Common myeloid progenitor, CD34-positive (primary cell): ENCODE measurements at regions of chr1 and their contacts with region 1.

Region 1: DNA sequence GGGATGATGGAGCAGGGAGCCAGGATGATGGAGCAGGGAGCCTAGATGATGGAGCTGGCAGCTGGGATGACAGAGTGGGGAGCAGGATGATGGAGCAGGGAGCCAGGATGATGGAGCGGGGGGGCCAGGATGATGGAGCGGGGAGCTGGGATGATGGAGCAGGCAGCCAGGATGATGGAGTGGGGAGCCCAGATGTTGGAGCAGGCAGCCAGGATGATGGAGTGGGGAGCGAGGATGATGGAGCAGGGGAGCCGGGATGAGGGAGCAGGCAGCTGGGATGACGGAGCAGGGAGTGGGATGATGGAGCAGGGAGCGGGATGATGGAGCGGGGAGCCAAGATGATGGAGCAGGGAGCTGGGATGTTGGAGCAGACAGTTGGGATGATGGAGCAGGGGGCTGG is 16.1 kb downstream of the GALNT2 start:
- DNase-seq: no peak
- H3K4me3 ChIP-seq: no peak overlapping the region
- H3K27ac ChIP-seq: no peak overlapping the region
- H3K4me1 ChIP-seq: peaks cover 0 to 30% (median 15%) of the 10 kb centered on the region in 4 experiments
- H3K27me3 ChIP-seq: no peaks in the 10 kb centered on the region

Region 2: DNA sequence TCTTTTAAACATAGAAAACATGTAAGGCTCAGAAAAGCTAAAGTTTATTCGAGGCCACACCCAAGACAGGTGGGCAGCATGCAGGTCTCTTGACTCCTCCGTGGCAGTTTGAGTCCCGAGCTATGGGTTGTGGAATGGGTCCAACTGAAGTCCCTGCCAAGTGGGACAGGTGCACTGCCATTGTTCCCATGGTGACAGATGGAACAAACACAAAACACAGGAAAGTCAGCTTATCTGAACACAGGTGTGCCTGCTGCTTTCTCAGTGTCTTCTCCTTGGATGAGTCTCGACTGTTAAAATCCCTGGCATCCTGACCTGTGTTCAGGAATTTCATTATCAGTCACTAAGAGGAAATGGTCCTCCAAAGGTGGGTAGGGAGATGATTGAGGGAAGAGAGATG is 911.2 kb before region 1 on chr1:
- CTCF ChIA-PET with region 1: no interaction called
- POLR2A ChIA-PET with region 1: interaction called, 11 read pairs
- DNase-seq: no peak
- H3K4me3 ChIP-seq: no peak overlapping the region
- H3K27ac ChIP-seq: no peak overlapping the region
- H3K4me1 ChIP-seq: no peaks in the 10 kb centered on the region
- H3K27me3 ChIP-seq: no peaks in the 10 kb centered on the region

Region 3: DNA sequence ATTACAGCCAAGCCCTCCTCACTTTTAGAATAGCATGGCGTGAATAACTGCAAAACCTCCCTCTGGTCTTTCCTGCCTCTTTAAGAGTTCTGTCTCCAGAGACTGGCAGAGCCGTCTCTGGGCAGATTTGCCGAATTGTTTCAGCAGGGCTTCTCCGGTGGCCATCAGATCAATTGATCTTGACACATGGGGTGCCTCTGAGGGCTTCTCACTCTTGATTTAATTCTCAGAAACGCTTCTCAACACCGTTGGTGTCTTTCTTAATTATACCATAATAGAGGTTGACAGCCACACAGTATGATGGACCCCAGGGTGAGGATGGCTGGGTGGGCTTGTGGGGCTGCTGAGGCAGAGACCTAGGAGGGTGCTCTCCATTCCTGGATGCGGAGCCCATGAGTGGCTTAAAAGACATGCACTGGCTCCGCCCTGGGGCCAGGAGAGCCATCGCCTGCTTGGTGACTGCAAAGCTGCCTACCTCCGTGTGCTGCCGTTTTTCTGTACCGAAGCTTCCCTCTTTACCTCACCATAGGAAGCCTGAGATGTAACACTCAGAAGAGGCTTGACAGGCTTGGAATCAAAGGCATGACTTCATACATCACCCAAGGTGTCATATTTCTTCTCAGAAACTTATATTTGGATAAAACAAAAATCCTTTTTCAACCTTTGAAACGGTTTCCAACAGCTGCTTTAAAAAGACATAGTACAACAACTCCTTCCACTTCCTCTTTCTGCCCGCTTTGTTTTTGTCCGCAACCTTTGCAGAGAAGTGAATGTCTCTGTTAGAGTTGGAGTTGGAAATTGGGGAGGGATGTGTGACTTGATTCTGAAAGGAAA is 66.9 kb after region 1 on chr1:
- CTCF ChIA-PET with region 1: no interaction called
- POLR2A ChIA-PET with region 1: no interaction called
- DNase-seq: peak; percentile 66 to 85 (median 78)
- H3K4me3 ChIP-seq: peak overlapping the region in 6 of 7 experiments; percentile 52 to 76 (median 59)
- H3K27ac ChIP-seq: peak overlapping the region; percentile 58 to 85
- H3K4me1 ChIP-seq: peaks cover 13 to 90% (median 58%) of the 10 kb centered on the region in 4 experiments
- H3K27me3 ChIP-seq: no peaks in the 10 kb centered on the region